MCF 10A (cell line): ENCODE measurements at regions of chr14 and their contacts with region 1.

Region 1: GRCh38 chr14:36373982-36374673 is 53.7 kb upstream of the MBIP start:
- DNase-seq: peak; percentile 86
- H3K4me3 Mint-ChIP-seq: no peak overlapping the region
- H3K27ac Mint-ChIP-seq: no peak overlapping the region
- H3K4me1 Mint-ChIP-seq: no peaks in the 10 kb centered on the region
- H3K27me3 Mint-ChIP-seq: no peaks in the 10 kb centered on the region
- CTCF ChIP-seq: peak; percentile 85

Region 2: GRCh38 chr14:35949985-35950384 is 424.1 kb before region 1 on chr14:
- CTCF ChIA-PET with region 1: no interaction called
- POLR2A ChIA-PET with region 1: no interaction called
- intact Hi-C with region 1: loop called (anchors 5 kb)
- DNase-seq: no peak
- H3K4me3 Mint-ChIP-seq: no peak overlapping the region
- H3K27ac Mint-ChIP-seq: no peak overlapping the region
- H3K4me1 Mint-ChIP-seq: no peaks in the 10 kb centered on the region
- H3K27me3 Mint-ChIP-seq: no peaks in the 10 kb centered on the region
- CTCF ChIP-seq: no peak

Region 3: DNA sequence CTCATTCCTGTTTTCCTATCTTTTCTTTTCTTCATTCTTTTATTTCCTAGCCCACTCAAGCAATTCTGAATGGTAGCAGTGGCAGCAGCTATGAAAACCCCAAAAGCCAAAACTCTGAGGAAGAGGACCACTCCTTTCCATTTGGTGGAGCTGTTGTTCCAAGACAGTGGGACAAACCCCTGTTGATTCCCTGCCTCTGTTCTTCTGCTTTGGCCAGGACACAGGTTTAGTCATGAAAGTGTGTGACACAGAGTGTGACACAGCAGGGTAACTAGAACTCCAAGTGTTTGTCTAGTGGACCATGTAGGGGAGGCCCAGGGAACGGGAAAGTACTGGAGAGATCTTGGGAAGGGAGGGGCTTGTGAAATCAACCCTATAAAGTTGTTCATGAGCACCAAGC is 268.7 kb before region 1 on chr14:
- CTCF ChIA-PET with region 1: interaction called, 5 read pairs
- POLR2A ChIA-PET with region 1: no interaction called
- intact Hi-C with region 1: loop called (anchors 1 kb)
- DNase-seq: peak; percentile 58
- H3K4me3 Mint-ChIP-seq: no peak overlapping the region
- H3K27ac Mint-ChIP-seq: no peak overlapping the region
- H3K4me1 Mint-ChIP-seq: no peaks in the 10 kb centered on the region
- H3K27me3 Mint-ChIP-seq: peaks cover 2% of the 10 kb centered on the region
- CTCF ChIP-seq: no peak

Region 4: GRCh38 chr14:36217732-36218131 is 156.4 kb before region 1 on chr14:
- CTCF ChIA-PET with region 1: interaction called, 20 read pairs
- POLR2A ChIA-PET with region 1: no interaction called
- intact Hi-C with region 1: no loop called
- DNase-seq: peak; percentile 64
- H3K4me3 Mint-ChIP-seq: no peak overlapping the region
- H3K27ac Mint-ChIP-seq: no peak overlapping the region
- H3K4me1 Mint-ChIP-seq: peaks cover 14% of the 10 kb centered on the region
- H3K27me3 Mint-ChIP-seq: no peaks in the 10 kb centered on the region
- CTCF ChIP-seq: no peak